ENCODE measurements at regions of chr4 and their contacts with region 1.

Region 1: DNA sequence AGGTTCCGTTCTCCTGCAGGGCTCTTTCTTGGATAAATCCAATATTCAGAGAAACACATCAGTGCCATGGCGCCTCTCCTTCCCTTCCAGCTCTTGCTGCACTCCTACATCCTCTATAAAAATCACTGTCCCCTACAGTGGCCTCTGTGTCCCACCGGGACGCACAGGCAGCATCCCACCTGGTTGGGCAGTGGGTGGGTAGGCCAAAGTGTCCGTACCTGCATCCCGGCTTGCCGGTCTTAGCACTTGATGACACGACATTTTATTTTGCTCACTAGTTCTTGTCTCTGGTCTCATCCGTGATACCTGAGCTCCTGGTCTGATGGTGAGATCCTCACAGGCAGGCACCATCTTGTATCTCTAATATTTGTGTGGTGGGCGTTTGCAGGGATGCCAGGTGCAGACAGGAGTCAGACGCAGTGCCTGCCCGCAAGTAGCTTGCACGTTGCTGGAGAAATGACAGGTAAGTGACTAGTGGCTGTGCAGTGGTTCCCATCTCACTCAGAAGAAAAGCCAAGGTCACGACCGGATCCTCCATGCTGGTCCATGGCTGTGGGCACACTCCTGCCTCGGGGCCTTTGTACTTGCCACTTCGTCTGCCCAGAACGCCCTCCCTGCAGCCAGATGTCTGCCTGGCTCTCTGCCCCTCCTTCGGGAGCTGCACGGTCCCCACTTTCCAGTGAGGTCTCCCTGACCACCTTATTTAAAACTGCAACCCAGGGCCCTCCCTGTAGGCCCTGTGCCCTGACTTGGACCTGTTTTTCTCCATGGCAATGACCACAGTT is 109.7 kb downstream of the SORCS2 start:
- DNase-seq: no peak
- H3K4me3 ChIP-seq: no peak overlapping the region
- H3K27ac ChIP-seq: peak overlapping the region in 3 of 59 donors; percentile 10 to 39 (median 38)
- H3K27me3 ChIP-seq: peaks cover 0 to 7% (median 0%) of the 10 kb centered on the region in 45 donors
- CTCF ChIP-seq: no peak

Region 2: DNA sequence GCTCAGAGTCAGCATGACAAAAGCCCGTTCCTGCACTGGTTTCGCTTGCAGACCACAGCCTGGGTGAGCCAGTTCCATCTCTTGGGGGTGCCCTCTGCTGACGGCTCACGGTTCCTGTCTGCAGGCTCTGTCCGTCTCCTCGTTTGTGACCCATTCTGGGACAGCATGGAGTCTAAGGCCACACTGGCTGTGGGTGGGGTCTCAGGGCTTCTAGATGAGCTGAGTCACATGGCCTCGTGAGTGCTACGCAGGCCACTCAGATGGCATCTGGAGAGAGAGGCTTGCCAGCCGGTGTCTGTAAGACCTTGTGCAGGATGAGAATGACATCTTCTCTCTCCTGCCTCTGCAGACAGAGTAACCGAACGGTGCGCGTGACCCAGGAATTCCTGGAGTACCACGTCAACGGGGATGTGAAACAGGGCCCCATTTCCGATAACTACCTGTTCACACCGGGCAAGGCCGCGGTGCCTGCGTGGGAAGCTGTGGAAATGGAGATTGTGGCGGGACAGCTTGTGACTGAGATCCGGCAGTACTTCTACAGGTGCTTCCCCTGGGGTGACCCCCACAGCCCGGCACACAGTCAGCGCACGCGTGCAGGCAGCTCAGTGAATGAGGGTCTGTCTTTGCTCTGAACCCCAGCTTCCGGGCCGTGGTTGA is 693.2 kb before region 1 on chr4:
- intact Hi-C with region 1: no loop called
- DNase-seq: peak in 8 of 10 donors; percentile 8 to 70 (median 60)
- H3K4me3 ChIP-seq: no peak overlapping the region
- H3K27ac ChIP-seq: peak overlapping the region in 43 of 59 donors; percentile 18 to 85 (median 58)
- H3K27me3 ChIP-seq: no peaks in the 10 kb centered on the region
- CTCF ChIP-seq: peak in 35 of 56 donors; percentile 13 to 49 (median 29)

Region 3: GRCh38 chr4:7238300-7238960 is 63.6 kb before region 1 on chr4:
- intact Hi-C with region 1: no loop called
- DNase-seq: no peak
- H3K4me3 ChIP-seq: no peak overlapping the region
- H3K27ac ChIP-seq: no peak overlapping the region
- H3K27me3 ChIP-seq: no peaks in the 10 kb centered on the region
- CTCF ChIP-seq: no peak

Region 4: DNA sequence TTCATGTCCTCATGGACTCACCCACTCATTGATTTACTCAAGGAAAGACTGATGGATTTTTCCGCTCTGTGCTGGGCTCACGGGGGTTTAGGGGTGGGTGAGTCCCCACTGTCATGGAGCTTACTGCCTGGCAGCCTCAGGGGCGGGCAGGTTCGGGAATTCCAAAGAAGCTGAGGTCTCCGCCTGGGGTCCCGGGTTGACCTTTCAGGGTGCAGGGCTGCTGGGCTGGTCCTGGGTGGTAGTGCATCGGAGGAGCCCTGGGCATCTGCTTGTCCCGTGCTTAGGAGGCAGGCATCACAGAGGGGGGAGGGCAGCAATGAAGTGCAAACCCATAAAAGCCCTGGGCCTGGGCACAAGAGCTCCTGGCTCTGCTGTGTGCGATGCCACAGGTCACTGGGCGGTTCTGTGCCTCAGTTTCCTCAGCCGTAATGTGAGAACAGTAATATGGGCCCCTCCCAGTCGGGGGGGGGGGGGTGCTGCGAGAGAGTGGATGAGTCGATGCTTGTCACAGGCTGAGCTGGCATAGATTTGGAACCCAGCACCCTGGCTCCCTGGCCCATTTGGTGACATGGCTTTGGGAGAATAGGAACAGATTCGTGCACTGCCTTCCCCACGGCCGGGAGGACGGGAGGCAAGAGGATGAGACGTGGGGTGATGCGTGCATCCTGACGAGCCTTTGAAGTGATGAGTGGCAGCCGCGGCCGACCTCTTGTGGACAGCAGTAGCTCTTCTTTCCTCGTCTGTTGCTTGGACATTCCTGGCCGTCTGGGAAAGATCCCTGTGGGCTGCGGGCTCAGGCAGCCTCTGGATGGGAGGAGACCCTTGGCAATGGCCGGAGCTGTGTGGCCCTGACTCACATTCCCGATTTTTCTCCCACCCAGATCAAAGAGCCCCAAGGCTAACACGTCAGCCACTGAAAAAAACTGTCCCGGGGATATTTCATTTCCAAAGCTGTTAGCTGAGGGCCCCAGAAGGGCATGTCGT is 90.7 kb after region 1 on chr4:
- intact Hi-C with region 1: loop called in 1 of 2 experiments (anchors 5 kb)
- DNase-seq: peak in 4 of 10 donors; percentile 25 to 43 (median 30)
- H3K4me3 ChIP-seq: no peak overlapping the region
- H3K27ac ChIP-seq: peak overlapping the region in 16 of 59 donors; percentile 7 to 81 (median 58)
- H3K27me3 ChIP-seq: no peaks in the 10 kb centered on the region
- CTCF ChIP-seq: no peak

Region 5: GRCh38 chr4:7719354-7720174 is 417.5 kb after region 1 on chr4:
- intact Hi-C with region 1: loop called in 1 of 2 experiments (anchors 5 kb)
- DNase-seq: peak; percentile 49 to 83 (median 66)
- H3K4me3 ChIP-seq: peak overlapping the region in 35 of 59 donors; percentile 2 to 57 (median 28)
- H3K27ac ChIP-seq: no peak overlapping the region
- H3K27me3 ChIP-seq: peaks cover 0 to 5% (median 0%) of the 10 kb centered on the region in 45 donors
- CTCF ChIP-seq: peak; percentile 62 to 95 (median 88)